ENCODE measurements at regions of chr1 and their contacts with region 1.

Region 1: GRCh38 chr1:205536759-205537361 is 32.4 kb downstream of the CDK18 start:
- DNase-seq: peak in 2 of 5 donors; percentile 53 to 59
- ATAC-seq: peak; percentile 56 to 81 (median 68)
- H3K4me3 ChIP-seq: no peak overlapping the region
- H3K27ac ChIP-seq: peak overlapping the region in 2 of 12 donors; percentile 19 to 21
- H3K4me1 ChIP-seq: peaks cover 0 to 21% (median 6%) of the 10 kb centered on the region in 12 donors
- H3K27me3 ChIP-seq: no peaks in the 10 kb centered on the region
- CTCF ChIP-seq: no peak
- POLR2A ChIP-seq: no peak

Region 2: DNA sequence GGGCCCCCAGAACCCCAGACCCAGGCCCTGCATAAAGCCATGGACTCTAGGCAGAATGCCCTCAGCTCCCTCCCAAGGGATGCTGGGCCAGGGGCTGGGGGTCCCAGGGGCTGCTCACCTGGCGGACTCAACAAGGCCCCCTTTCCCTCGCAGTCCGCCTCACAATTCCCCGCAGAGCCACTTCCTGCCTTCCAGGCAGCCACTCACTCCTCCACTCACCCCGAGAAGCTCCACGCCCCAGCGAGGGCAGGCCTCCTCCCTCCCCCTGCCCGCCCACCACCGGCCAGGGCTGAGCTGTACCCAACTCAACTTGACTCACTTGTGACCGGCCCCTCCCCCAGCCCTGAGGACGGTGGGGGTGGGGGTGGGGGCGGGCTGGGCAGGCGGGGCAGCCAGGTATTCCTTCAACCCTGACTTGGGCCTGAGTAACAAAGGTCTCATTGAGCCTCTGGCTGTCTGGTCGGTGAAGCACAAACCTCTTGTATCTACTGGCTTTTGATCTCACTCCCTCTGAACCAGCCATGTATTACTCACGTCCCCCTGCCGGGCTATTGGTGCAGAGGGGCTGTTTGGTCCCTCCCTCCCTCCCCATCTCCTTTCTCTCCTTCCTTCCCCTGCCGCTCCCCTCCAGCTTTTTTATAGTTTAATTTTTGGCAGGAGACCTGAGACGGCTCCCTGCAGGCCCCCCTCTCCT is 87.0 kb before region 1 on chr1:
- intact Hi-C with region 1: no loop called
- DNase-seq: no peak
- ATAC-seq: no peak
- H3K4me3 ChIP-seq: no peak overlapping the region
- H3K27ac ChIP-seq: no peak overlapping the region
- H3K4me1 ChIP-seq: peaks cover 0 to 39% (median 16%) of the 10 kb centered on the region in 12 donors
- H3K27me3 ChIP-seq: peaks cover 8 to 53% (median 36%) of the 10 kb centered on the region in 9 donors
- CTCF ChIP-seq: no peak
- POLR2A ChIP-seq: no peak

Region 3: DNA sequence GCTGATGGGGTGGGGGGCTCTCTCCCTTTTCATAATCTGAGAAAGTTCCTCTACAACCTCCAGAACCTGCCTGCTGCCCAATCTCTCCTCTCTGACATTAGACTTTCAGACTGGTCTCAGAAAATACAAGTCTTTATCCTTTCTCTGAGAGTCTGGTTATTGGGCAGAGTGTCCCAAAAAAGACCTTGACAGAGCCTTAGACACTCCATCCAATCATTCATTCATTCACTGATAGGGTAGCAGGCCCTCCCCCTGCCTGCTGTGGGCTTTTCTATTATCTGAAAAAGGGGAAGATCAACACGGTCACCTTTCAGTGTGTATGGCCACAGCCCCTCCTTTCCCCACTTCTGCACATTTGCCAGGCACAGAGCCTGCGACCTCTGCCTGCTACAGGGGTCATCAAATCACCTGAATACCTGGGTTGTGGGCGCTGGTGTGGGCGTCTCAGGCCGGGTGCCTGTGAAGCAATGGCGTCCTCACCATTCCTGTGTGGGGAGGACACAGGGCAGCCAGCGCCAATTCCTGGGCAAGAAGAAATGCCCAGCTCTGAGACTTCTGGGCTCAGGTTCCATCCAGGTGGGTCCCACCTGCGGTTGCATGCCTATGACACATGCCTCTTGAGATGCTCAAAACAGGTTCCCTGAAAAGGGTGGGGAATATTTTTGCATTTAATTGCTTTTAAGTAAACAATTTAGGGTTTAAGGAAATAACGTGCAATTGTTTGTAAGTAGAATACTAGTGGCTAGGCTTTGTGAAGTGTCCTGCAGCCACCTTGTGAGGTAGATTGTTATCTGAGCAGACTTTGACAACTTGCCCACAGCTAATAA is 42.1 kb after region 1 on chr1:
- intact Hi-C with region 1: loop called in 5 of 10 experiments (anchors 5 kb)
- DNase-seq: peak in 1 of 5 donors; percentile 3
- ATAC-seq: no peak
- H3K4me3 ChIP-seq: no peak overlapping the region
- H3K27ac ChIP-seq: no peak overlapping the region
- H3K4me1 ChIP-seq: peaks cover 0 to 17% (median 12%) of the 10 kb centered on the region in 12 donors
- H3K27me3 ChIP-seq: peaks cover 0 to 23% (median 0%) of the 10 kb centered on the region in 9 donors
- CTCF ChIP-seq: no peak
- POLR2A ChIP-seq: no peak

Region 4: GRCh38 chr1:205584732-205585131 is 47.9 kb after region 1 on chr1:
- intact Hi-C with region 1: loop called in 7 of 10 experiments (anchors 5 kb)
- DNase-seq: no peak
- ATAC-seq: no peak
- H3K4me3 ChIP-seq: no peak overlapping the region
- H3K27ac ChIP-seq: no peak overlapping the region
- H3K4me1 ChIP-seq: peaks cover 0 to 20% (median 12%) of the 10 kb centered on the region in 12 donors
- H3K27me3 ChIP-seq: peaks cover 0 to 13% (median 0%) of the 10 kb centered on the region in 9 donors
- CTCF ChIP-seq: peak in 9 of 12 donors; percentile 12 to 42 (median 29)
- POLR2A ChIP-seq: no peak

Region 5: DNA sequence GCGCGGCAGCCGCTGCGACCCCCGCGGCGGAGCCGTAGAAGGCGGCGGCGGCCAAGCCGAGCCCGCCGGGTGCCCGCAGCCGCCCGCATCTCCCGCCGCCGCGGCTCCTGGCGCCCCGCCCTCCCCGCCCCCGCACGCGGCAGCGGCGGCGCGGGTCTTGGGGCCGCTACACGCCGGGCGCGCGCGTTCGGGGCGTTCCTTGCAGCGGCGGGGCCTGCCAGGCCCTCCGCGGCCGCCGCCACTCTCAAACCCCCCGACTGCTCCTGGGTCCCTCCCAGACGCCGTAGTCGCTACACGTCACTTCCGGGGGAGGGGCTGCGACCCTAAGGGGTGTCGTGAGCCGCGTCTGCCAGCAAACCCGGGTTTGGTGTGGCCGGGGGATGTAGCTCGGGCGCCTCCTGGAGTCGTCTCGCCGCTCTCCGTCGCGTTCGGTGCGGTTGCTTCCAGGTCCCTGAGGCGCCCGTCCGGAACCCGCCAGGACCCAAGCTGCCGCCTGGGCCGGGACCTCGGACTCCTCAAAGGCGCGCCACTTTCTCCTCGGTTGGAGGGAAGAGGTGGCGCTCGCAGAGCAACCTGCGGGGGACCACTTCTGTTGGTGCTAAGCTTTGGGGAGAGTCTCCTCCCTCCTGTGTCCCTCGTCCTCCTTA is 95.0 kb after region 1 on chr1 and contains the start of gene ELK4:
- intact Hi-C with region 1: loop called in 3 of 10 experiments (anchors 5 to 10 kb)
- DNase-seq: peak; percentile 99 to 100 (median 99)
- ATAC-seq: peak; percentile 99 to 100 (median 99)
- H3K4me3 ChIP-seq: peak within 1 kb of the TSS; percentile 47 to 88 (median 74)
- H3K27ac ChIP-seq: peak within 1 kb of the TSS; percentile 89 to 97 (median 95)
- H3K4me1 ChIP-seq: peaks cover 4 to 50% (median 22%) of the 10 kb centered on the region in 12 donors
- H3K27me3 ChIP-seq: no peaks in the 10 kb centered on the region
- CTCF ChIP-seq: peak; percentile 67 to 92 (median 76)
- POLR2A ChIP-seq: peak in 1 of 2 donors; percentile 97
- total RNA-seq, gene ELK4: 18.5 to 54.9 (median 36.5) TPM

Region 6: GRCh38 chr1:205645519-205645918 is 108.7 kb after region 1 on chr1:
- intact Hi-C with region 1: loop called in 1 of 10 experiments (anchors 5 kb)
- DNase-seq: no peak
- ATAC-seq: no peak
- H3K4me3 ChIP-seq: no peak overlapping the region
- H3K27ac ChIP-seq: no peak overlapping the region
- H3K4me1 ChIP-seq: peaks cover 0 to 5% (median 0%) of the 10 kb centered on the region in 12 donors
- H3K27me3 ChIP-seq: no peaks in the 10 kb centered on the region
- CTCF ChIP-seq: no peak
- POLR2A ChIP-seq: no peak